ENCODE measurements at regions of chr10 and their contacts with region 1.

Region 1: GRCh38 chr10:123380497-123381085 is 226.4 kb downstream of the BUB3 start:
- DNase-seq: peak; percentile 32
- H3K27ac ChIP-seq: no peak overlapping the region
- CTCF ChIP-seq: no peak

Region 2: DNA sequence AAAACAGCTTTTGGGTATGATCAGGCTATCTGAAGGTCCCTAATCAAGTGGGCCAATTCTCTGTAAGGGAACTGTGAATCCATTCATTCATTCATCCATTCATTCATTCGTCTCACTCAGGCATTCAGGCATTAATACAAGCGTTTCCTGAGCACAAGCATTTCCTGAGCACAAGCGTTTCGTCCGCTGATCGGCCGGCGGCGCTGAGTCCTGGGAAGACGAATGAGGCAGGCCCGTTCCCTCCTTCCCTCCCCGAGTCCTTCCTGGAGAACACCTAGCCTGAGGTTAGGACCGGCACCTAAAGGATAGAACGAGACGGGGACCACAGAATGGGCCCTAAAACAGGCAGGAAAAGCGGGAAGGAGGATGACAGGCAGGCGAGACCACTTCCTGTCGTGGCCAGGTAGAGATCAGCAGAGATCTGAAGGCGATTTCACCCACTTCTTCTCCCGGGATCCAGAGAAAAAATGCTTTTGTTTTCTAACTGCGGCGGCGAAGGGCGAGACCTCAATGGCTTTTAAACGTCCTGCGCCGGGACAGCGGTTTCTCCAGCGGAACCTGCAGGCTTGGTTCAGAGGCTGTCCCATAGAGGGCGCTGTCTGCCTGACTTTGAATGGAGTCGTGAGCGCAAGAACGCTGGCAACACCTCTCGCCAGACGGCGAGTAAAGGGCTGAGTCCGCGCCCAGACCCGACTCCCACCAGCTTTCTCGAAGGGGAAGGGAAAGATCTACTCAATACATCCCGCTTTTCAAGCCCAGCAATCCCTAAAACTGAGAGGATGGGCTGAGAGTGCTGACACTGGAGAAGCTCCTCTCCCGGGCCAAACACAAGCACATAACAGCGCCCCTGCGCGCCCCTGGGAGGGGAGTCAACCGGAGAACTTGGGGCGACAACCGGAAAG is 247.8 kb before region 1 on chr10:
- CTCF ChIA-PET with region 1: interaction called, 13 read pairs
- POLR2A ChIA-PET with region 1: no interaction called
- DNase-seq: peak; percentile 90
- H3K27ac ChIP-seq: no peak overlapping the region
- CTCF ChIP-seq: peak; percentile 83

Region 3: DNA sequence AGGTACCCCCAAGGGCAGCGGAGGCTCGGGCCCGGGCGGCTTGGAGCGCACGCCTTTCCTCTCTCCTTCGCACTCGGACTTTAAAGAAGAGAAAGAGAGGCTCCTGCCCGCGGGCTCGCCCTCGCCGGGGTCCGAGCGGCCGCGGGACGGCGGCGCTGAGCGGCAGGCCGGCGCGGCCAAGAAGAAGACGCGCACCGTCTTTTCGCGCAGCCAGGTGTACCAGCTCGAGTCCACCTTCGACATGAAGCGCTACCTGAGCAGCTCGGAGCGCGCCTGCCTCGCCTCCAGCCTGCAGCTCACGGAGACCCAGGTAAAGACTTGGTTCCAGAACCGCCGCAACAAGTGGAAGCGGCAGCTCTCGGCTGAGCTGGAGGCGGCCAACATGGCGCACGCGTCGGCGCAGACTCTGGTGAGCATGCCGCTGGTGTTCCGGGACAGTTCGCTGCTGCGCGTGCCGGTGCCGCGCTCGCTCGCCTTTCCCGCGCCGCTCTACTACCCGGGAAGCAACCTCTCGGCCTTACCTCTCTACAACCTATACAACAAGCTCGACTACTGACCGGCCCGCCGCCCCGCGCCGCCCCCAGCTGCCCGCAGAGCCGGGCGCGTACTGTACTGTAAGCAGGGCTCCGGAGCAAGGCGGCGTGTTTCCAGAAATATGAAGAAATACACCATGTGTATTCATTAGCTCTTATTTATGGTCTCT is 230.9 kb before region 1 on chr10:
- CTCF ChIA-PET with region 1: interaction called, 11 read pairs
- POLR2A ChIA-PET with region 1: no interaction called
- DNase-seq: no peak
- H3K27ac ChIP-seq: no peak overlapping the region
- CTCF ChIP-seq: no peak

Region 4: DNA sequence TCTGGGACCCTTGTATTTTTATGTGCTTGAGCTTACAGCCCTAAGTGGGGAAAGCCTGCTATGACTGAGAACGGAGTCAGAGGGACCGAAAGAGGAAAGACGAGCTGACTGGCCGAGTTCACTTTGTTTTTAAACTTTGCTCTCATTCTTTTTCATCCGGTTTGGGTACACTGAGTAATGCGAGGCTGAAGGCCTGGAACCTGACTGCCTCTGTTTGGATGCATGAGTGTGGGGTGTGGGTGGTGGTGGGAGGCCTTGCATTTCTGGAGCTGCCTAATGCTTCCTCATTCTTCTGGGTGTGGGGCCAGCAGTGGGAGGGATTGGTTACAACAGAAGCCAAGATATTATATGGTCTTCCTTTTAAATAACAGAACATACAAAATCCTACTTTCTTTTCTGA is 70.9 kb before region 1 on chr10:
- CTCF ChIA-PET with region 1: no interaction called
- POLR2A ChIA-PET with region 1: no interaction called
- DNase-seq: no peak
- H3K27ac ChIP-seq: no peak overlapping the region
- CTCF ChIP-seq: no peak

Region 5: GRCh38 chr10:123327450-123327849 is 53.1 kb before region 1 on chr10:
- CTCF ChIA-PET with region 1: no interaction called
- POLR2A ChIA-PET with region 1: no interaction called
- DNase-seq: no peak
- H3K27ac ChIP-seq: no peak overlapping the region
- CTCF ChIP-seq: no peak

Region 6: GRCh38 chr10:123746942-123747341 is 366.4 kb after region 1 on chr10:
- CTCF ChIA-PET with region 1: no interaction called
- POLR2A ChIA-PET with region 1: no interaction called
- DNase-seq: no peak
- H3K27ac ChIP-seq: no peak overlapping the region
- CTCF ChIP-seq: no peak